ENCODE measurements at regions of chr3 and their contacts with region 1.

Region 1: DNA sequence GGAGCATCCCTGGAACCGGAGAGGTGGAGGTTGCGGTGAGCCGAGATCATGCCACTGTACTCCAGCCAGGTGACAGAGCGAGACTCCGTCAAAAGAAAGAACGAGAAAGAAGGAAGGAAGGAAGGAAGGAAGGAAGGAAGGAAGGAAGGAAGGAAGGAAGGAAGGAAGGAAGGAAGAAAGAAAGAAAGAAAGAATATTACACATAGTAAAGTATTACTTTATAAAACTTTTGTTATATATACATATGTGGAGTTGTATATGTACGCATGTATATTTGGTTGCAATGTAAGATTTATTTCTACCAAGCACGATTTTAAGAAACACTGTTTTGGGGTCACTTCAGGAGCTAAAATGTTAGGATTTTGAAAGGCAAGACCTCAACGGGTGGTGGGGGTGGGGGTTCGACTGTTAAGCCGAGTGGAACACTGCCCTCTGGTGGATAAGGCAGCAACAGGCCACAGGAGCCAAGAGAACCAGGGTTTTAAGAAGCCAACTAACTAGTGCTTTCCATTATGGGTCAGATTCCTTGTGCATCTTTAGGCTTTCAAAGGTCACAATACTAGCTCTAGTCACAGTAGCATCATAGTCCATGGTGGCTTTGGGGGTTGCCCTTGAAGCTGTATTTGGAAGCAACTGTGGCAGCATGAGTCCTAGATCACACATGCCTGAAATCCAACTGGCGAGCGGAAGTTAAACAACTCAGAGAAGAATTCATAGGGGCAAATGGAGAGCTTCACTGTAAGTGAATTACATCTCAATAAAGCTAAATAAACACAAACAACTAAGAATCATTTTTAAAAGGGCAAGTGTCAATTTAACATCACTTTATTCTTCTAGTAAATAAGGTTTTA is 22.5 kb downstream of the GLB1 start:
- DNase-seq: peak in 1 of 2 experiments; percentile 76
- H3K4me3 ChIP-seq: no peak overlapping the region
- H3K27ac ChIP-seq: no peak overlapping the region
- H3K4me1 ChIP-seq: peaks cover 0 to 2% (median 0%) of the 10 kb centered on the region in 4 experiments; a peak in 1 of 7 replicates
- H3K27me3 ChIP-seq: no peaks in the 10 kb centered on the region
- CTCF ChIP-seq: peak; percentile 81 to 98 (median 85)
- EP300 ChIP-seq: no peak
- POLR2A ChIP-seq: no peak
- RAD21 ChIP-seq: peak; percentile 76 to 79

Region 2: DNA sequence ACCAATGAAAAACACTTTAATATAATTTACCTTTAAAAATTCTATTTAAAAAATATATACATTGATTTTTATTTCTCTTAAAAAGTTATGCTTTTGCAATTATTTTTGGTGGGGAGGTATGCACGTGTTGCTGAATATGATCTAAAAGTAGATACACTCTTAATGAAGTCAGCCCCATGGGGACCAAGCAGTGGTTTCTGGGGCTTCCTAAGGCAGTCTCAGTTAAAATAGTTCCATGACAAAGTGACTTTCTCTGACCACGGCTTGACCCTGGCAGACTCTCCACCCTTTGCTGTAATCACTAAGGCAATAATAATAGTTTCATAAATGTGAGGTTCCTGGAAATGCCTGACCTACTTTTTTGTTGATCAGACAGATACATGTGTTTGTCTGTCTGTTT is 72.6 kb before region 1 on chr3:
- CTCF ChIA-PET with region 1: interaction called, 10 read pairs
- POLR2A ChIA-PET with region 1: no interaction called
- DNase-seq: no peak
- H3K4me3 ChIP-seq: no peak overlapping the region
- H3K27ac ChIP-seq: no peak overlapping the region
- H3K4me1 ChIP-seq: peaks cover 2 to 9% (median 5%) of the 10 kb centered on the region in 4 experiments; a peak in 4 of 7 replicates
- H3K27me3 ChIP-seq: no peaks in the 10 kb centered on the region
- CTCF ChIP-seq: no peak
- EP300 ChIP-seq: no peak
- POLR2A ChIP-seq: no peak
- RAD21 ChIP-seq: no peak

Region 3: GRCh38 chr3:33047842-33048834 is 26.3 kb before region 1 on chr3:
- CTCF ChIA-PET with region 1: interaction called, 11 read pairs
- POLR2A ChIA-PET with region 1: no interaction called
- DNase-seq: no peak
- H3K4me3 ChIP-seq: no peak overlapping the region
- H3K27ac ChIP-seq: no peak overlapping the region
- H3K4me1 ChIP-seq: no peaks in the 10 kb centered on the region
- H3K27me3 ChIP-seq: no peaks in the 10 kb centered on the region
- CTCF ChIP-seq: no peak
- EP300 ChIP-seq: no peak
- POLR2A ChIP-seq: no peak
- RAD21 ChIP-seq: no peak

Region 4: DNA sequence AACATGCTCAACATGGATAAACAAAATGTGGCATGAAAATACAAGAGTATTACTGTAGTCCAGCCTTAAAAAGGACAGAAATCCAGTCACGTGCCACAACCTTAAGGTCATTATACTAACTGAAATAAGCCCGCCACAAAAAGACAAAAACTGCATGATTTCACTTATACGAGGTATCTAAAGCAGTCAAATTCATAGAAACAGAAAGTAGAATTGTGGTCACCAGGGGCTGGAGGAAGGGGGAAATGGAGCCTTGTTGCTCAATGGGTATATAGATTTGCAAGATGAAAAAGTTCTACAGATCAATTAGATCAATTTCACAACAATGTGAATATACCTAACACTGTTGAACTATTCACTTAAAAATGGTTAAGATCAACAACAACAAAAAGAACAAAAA is 15.1 kb after region 1 on chr3:
- CTCF ChIA-PET with region 1: interaction called, 45 read pairs
- POLR2A ChIA-PET with region 1: no interaction called
- DNase-seq: no peak
- H3K4me3 ChIP-seq: no peak overlapping the region
- H3K27ac ChIP-seq: no peak overlapping the region
- H3K4me1 ChIP-seq: peaks cover 0 to 3% (median 0%) of the 10 kb centered on the region in 4 experiments; a peak in 2 of 7 replicates
- H3K27me3 ChIP-seq: no peaks in the 10 kb centered on the region
- CTCF ChIP-seq: no peak
- EP300 ChIP-seq: no peak
- POLR2A ChIP-seq: no peak
- RAD21 ChIP-seq: no peak

Measured in H1 (cell line).